WTC11 (cell line): ENCODE measurements at regions of chr3 and their contacts with region 1.

Region 1: GRCh38 chr3:141050576-141051442 is at the start of gene SPSB4:
- DNase-seq: peak; percentile 91
- ATAC-seq: peak; percentile 80
- H3K4me3 Mint-ChIP-seq: peak within 1 kb of the TSS; percentile 92
- H3K27ac Mint-ChIP-seq: peak within 1 kb of the TSS; percentile 46
- H3K4me1 Mint-ChIP-seq: peaks cover 20% of the 10 kb centered on the region
- H3K27me3 Mint-ChIP-seq: peaks cover 30% of the 10 kb centered on the region
- CTCF ChIP-seq: 0 out of 2 replicates have a peak, but pooled peaks have one; percentile 13
- total RNA-seq, gene SPSB4: 19.4 to 19.7 TPM (median 19.6 TPM) in 3 replicates

Region 2: DNA sequence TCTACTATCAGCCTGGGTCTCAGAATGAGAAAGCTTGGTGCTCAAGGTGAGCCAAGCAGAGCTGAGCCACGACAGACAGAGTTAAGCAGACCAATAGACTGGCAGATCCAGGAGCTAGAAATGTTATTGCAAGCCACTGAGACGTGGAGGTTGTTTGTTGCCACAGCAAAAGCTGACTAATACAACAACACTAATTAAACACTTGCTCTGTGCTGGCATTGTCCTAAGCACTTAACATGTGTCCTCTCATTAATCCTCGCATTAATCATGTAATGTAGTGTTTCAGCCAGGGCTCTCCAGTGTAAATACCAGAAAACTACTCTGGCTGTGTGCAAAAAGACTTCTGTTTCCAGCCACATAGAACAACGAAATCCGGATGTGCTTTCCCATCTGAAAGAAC is 11.2 kb before region 1 on chr3:
- CTCF ChIA-PET with region 1: interaction called, 38 read pairs
- POLR2A ChIA-PET with region 1: interaction called, 3 read pairs
- DNase-seq: no peak
- ATAC-seq: peak; percentile 32; the same call in 1 of the 2 replicates
- H3K4me3 Mint-ChIP-seq: no peak overlapping the region
- H3K27ac Mint-ChIP-seq: no peak overlapping the region
- H3K4me1 Mint-ChIP-seq: no peaks in the 10 kb centered on the region
- H3K27me3 Mint-ChIP-seq: no peaks in the 10 kb centered on the region; the same call in 1 of the 2 replicates
- CTCF ChIP-seq: no peak

Region 3: DNA sequence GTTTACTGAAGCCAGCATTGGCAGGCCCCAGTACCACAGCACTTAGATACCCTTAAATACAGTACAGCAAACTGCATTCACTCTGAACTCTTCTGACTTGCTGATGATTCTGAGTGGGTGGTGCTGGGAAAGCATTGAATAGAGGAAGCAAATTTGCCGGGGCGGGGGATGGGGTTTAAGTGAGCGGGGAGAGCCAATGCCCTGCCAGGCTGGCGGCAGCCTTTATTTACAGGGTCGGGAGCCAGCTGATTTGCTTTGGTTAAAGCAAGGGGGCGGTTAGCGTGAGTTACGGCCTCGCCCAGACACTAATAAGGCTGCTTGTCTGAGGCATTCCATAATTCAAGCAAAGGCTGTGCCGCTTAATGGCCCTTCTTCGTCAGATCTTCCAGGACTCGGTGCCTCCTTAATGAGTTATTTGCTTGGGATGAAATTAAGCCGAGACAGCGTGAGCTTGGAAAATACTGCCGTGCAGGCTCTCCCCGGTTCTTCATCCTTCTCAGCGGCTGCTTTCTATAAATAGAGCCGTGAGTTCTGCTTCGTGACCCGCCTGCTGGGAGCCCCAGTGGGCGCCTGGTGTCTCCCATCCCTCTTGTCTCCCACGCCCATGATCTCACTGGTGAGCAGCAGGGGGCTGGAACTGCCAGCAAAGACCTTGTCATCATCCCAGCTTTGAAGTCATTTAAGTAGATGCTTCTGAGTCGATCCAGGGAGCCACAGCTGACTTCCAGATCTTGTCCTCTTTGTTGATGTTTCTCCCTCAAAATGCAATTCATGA is 26.2 kb after region 1 on chr3:
- CTCF ChIA-PET with region 1: interaction called, 114 read pairs
- POLR2A ChIA-PET with region 1: interaction called, 9 read pairs
- DNase-seq: peak; percentile 45
- ATAC-seq: peak; percentile 9
- H3K4me3 Mint-ChIP-seq: 0 out of 2 replicates have a peak overlapping the region, but pooled peaks have one; percentile 6
- H3K27ac Mint-ChIP-seq: peak overlapping the region; percentile 89
- H3K4me1 Mint-ChIP-seq: peaks cover 95% of the 10 kb centered on the region
- H3K27me3 Mint-ChIP-seq: peaks cover 1% of the 10 kb centered on the region; the same call in 1 of the 2 replicates
- CTCF ChIP-seq: no peak

Region 4: DNA sequence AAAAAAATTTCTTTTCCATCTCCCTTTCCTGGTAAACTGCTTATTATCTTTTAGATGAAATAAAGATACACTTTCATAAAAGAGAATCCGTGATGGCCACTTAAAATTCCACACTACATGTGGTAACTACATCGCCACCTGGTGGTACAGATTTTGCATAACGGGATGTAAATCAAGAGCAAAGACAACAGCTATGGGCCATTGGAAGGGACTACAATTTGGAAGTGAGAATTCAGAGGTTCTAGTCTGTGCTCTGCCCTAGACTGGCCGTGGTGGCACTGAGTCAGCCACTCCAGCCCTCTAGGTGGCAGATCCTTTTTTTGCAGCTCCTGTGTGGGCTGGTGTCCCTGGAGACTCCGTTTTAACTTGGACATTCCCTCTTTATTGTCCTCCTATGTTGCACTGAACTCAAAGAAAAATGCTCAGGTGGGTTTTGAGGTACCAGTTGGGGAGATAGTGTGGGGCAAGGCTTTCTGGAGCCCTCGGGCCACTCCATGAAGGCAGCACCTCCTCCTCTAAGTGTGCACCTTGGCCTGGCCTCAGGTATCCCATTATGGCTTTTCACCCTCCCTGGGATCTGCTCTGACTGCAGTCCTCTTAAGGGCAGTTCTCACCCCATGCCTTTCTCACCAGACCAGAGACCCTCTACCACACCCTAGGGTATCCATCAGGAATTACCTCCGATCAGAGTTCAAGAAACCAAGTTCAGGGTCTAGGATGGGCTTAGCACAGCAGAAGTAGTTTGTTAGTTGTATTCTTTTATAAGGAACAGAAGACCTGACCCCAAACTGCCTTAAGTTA is 55.2 kb after region 1 on chr3:
- CTCF ChIA-PET with region 1: interaction called, 80 read pairs
- POLR2A ChIA-PET with region 1: interaction called, 9 read pairs
- DNase-seq: peak; percentile 72
- ATAC-seq: peak; percentile 80
- H3K4me3 Mint-ChIP-seq: no peak overlapping the region
- H3K27ac Mint-ChIP-seq: no peak overlapping the region; the same call in 1 of the 2 replicates
- H3K4me1 Mint-ChIP-seq: peaks cover 34% of the 10 kb centered on the region
- H3K27me3 Mint-ChIP-seq: no peaks in the 10 kb centered on the region; the same call in 1 of the 2 replicates
- CTCF ChIP-seq: peak; percentile 44

Region 5: GRCh38 chr3:141150081-141150830 is 99.4 kb after region 1 on chr3:
- CTCF ChIA-PET with region 1: interaction called, 14 read pairs
- POLR2A ChIA-PET with region 1: no interaction called
- DNase-seq: no peak
- ATAC-seq: peak; percentile 62
- H3K4me3 Mint-ChIP-seq: no peak overlapping the region
- H3K27ac Mint-ChIP-seq: no peak overlapping the region
- H3K4me1 Mint-ChIP-seq: peaks cover 13% of the 10 kb centered on the region
- H3K27me3 Mint-ChIP-seq: no peaks in the 10 kb centered on the region; the same call in 1 of the 2 replicates
- CTCF ChIP-seq: no peak

Region 6: GRCh38 chr3:141231101-141231935 is 180.5 kb after region 1 on chr3 and contains the start of gene PXYLP1:
- CTCF ChIA-PET with region 1: interaction called, 12 read pairs
- POLR2A ChIA-PET with region 1: no interaction called
- DNase-seq: peak; percentile 94
- ATAC-seq: peak; percentile 88
- H3K4me3 Mint-ChIP-seq: peak within 1 kb of the TSS; percentile 77
- H3K27ac Mint-ChIP-seq: 0 out of 2 replicates have a peak within 1 kb of the TSS, but pooled peaks have one; percentile 5
- H3K4me1 Mint-ChIP-seq: peaks cover 52% of the 10 kb centered on the region
- H3K27me3 Mint-ChIP-seq: peaks cover 39% of the 10 kb centered on the region
- CTCF ChIP-seq: peak; percentile 72
- total RNA-seq, gene PXYLP1: 16.9 to 20.1 TPM (median 19.7 TPM) in 3 replicates